Activated B cell treated with CpG ODN at 0.5 μM for 24 hours (primary cell): ENCODE measurements at regions of chr2 and their contacts with region 1.

Region 1: GRCh38 chr2:216498418-216499413 is at the start of gene RPL37A:
- DNase-seq: peak; percentile 82
- ATAC-seq: peak; percentile 97
- H3K4me3 Mint-ChIP-seq: peak within 1 kb of the TSS; percentile 98
- H3K27ac Mint-ChIP-seq: peak within 1 kb of the TSS; percentile 92
- H3K4me1 Mint-ChIP-seq: peaks cover 63% of the 10 kb centered on the region
- H3K27me3 Mint-ChIP-seq: no peaks in the 10 kb centered on the region
- CTCF ChIP-seq: no peak
- total RNA-seq, gene RPL37A: 4,501 and 5,377 TPM in 2 replicates

Region 2: DNA sequence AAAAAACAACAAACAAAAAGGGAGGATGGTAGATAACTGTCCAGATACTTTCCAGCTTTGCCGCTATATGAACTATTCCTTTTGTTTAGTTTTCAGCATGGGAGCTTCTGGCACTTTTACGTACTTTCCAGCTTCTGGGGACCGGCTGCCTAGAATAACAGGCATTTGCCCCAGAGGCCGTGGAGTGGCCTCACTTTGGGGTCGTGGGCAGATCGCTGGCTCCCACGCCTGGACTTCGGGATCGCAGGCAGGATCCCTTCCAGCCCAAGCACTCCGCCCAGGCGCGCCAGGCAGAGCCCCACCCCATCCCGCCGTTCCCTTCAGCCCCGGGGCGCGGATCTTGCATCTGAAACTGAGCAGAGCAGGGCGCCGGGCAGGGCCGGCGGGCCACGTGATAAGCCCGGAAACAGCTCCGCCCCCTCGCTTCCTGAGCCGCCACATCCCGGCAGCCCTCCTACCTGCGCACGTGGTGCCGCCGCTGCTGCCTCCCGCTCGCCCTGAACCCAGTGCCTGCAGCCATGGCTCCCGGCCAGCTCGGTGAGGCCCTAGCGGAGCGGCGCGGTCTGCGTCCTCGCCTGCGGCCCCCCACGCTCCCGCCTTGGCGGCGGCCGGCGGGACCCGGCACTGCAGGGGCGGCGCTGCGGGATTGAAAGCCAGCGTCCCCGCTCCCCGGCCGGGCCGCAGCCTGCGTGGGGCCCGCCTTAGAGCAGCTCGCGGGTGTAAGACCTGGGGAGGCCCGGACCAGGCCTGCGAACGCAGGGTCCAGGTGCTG is 1186.9 kb before region 1 on chr2 and contains the start of gene ATIC:
- CTCF ChIA-PET with region 1: no interaction called
- POLR2A ChIA-PET with region 1: no interaction called
- intact Hi-C with region 1: loop called (anchors 5 kb)
- DNase-seq: peak; percentile 86
- ATAC-seq: peak; percentile 96
- H3K4me3 Mint-ChIP-seq: peak within 1 kb of the TSS; percentile 95
- H3K27ac Mint-ChIP-seq: peak within 1 kb of the TSS; percentile 91
- H3K4me1 Mint-ChIP-seq: peaks cover 35% of the 10 kb centered on the region
- H3K27me3 Mint-ChIP-seq: no peaks in the 10 kb centered on the region
- CTCF ChIP-seq: no peak
- total RNA-seq, gene ATIC: 161 and 179 TPM in 2 replicates

Region 3: GRCh38 chr2:216114714-216115557 is 383.8 kb before region 1 on chr2:
- CTCF ChIA-PET with region 1: no interaction called
- POLR2A ChIA-PET with region 1: interaction called, 6 read pairs
- intact Hi-C with region 1: loop called (anchors 1 kb)
- DNase-seq: peak; percentile 85
- ATAC-seq: peak; percentile 91
- H3K4me3 Mint-ChIP-seq: peak overlapping the region; percentile 94
- H3K27ac Mint-ChIP-seq: peak overlapping the region; percentile 97
- H3K4me1 Mint-ChIP-seq: peaks cover 78% of the 10 kb centered on the region
- H3K27me3 Mint-ChIP-seq: no peaks in the 10 kb centered on the region
- CTCF ChIP-seq: no peak

Region 4: DNA sequence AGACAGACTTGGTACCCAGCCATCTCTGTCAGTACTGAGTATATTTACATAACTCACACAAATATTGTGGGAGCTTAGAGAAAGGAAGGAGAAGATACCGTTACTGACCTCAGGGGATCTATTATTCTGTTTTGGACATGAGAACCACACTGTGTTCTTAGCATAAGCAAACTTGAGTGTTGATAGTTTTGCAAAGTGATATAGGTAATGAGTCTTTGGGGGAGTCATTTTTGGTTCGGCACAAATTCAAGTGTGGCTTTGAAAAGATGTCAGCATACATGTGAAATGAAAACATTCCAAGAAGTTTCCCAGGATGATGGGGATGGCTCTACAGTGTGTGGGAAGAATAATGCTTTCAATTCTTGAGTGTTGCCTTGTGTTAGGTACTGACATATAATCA is 62.3 kb before region 1 on chr2:
- CTCF ChIA-PET with region 1: no interaction called
- POLR2A ChIA-PET with region 1: interaction called, 10 read pairs
- intact Hi-C with region 1: no loop called
- DNase-seq: no peak
- ATAC-seq: no peak
- H3K4me3 Mint-ChIP-seq: no peak overlapping the region
- H3K27ac Mint-ChIP-seq: no peak overlapping the region
- H3K4me1 Mint-ChIP-seq: no peaks in the 10 kb centered on the region
- H3K27me3 Mint-ChIP-seq: no peaks in the 10 kb centered on the region
- CTCF ChIP-seq: no peak

Region 5: GRCh38 chr2:217090024-217090473 is 591.3 kb after region 1 on chr2:
- CTCF ChIA-PET with region 1: no interaction called
- POLR2A ChIA-PET with region 1: no interaction called
- intact Hi-C with region 1: loop called (anchors 10 kb)
- DNase-seq: no peak
- ATAC-seq: peak; percentile 91
- H3K4me3 Mint-ChIP-seq: peak overlapping the region; percentile 45
- H3K27ac Mint-ChIP-seq: no peak overlapping the region
- H3K4me1 Mint-ChIP-seq: peaks cover 23% of the 10 kb centered on the region
- H3K27me3 Mint-ChIP-seq: peaks cover 2% of the 10 kb centered on the region
- CTCF ChIP-seq: no peak